Cardiac septum (tissue), 1 donor: ENCODE measurements at regions of chr17 and their contacts with region 1.

Region 1: GRCh38 chr17:54992797-54993639 is 24.5 kb downstream of the STXBP4 start:
- DNase-seq: no peak

Region 2: GRCh38 chr17:54900457-54901229 is 92.4 kb before region 1 on chr17 and contains the start of gene TOM1L1:
- intact Hi-C with region 1: no loop called
- DNase-seq: peak; percentile 77
- total RNA-seq, gene TOM1L1: 9.6 TPM

Region 3: DNA sequence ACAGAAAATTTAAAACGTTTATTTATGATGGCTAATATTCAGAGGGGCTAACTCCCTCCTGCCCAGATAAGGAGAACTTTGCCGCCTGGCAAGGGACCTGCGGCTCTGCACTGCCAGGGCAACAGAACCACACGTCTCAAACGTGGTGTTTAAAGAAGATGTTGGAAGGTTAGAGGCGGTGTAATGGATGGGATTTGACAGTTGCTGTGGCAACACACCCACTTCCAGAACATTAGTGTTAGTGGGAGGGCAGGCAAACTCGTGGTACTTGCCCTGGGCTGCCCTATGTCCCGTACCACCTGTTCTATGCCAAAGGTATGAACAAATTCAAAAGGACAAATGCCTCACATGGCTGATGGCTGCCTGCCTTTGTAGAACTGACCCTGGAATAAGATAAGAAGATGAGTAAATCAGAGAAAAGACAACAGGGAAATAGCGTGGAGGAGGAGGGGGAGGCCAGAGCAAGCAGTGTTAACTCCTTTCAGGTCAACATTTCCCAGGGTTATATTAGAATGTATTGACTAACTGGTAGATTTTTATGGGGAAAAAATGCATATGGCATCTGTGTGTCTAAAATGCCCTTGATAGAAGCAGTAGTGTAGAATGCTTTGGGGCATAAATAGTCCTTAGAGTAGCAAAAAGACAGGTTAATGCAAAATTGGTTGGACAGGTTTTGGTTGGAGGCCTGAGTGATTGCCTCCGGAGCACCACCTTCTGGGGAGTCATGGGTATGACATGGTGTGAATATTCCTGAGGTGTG is 302.6 kb after region 1 on chr17:
- intact Hi-C with region 1: loop called (anchors 5 kb)
- DNase-seq: no peak